Mammary epithelial cell (primary cell): ENCODE measurements at regions of chr4 and their contacts with region 1.

Region 1: GRCh38 chr4:85756938-85757337 is 282.0 kb downstream of the ARHGAP24 start:
- DNase-seq: no peak
- H3K4me3 ChIP-seq: no peak overlapping the region
- H3K27ac ChIP-seq: no peak overlapping the region
- H3K4me1 ChIP-seq: no peaks in the 10 kb centered on the region
- H3K27me3 ChIP-seq: no peaks in the 10 kb centered on the region
- CTCF ChIP-seq: peak; percentile 40 to 58

Region 2: GRCh38 chr4:85798012-85798770 is 41.3 kb after region 1 on chr4:
- CTCF ChIA-PET with region 1: no interaction called
- dilution Hi-C with region 1: no loop called
- in situ Hi-C with region 1: no loop called
- intact Hi-C with region 1: loop called (anchors 1 kb)
- DNase-seq: peak; percentile 53
- H3K4me3 ChIP-seq: no peak overlapping the region
- H3K27ac ChIP-seq: no peak overlapping the region
- H3K4me1 ChIP-seq: peaks cover 6% of the 10 kb centered on the region
- H3K27me3 ChIP-seq: no peaks in the 10 kb centered on the region
- CTCF ChIP-seq: no peak

Region 3: GRCh38 chr4:86223472-86223871 is 466.5 kb after region 1 on chr4:
- CTCF ChIA-PET with region 1: no interaction called
- dilution Hi-C with region 1: no loop called
- in situ Hi-C with region 1: no loop called
- intact Hi-C with region 1: loop called (anchors 2 kb)
- DNase-seq: peak; percentile 19
- H3K4me3 ChIP-seq: no peak overlapping the region
- H3K27ac ChIP-seq: no peak overlapping the region
- H3K4me1 ChIP-seq: peaks cover 7% of the 10 kb centered on the region
- H3K27me3 ChIP-seq: no peaks in the 10 kb centered on the region
- CTCF ChIP-seq: peak; percentile 49 to 76

Region 4: GRCh38 chr4:86593688-86594558 is 837.0 kb after region 1 on chr4 and contains the start of gene PTPN13:
- CTCF ChIA-PET with region 1: no interaction called
- dilution Hi-C with region 1: no loop called
- in situ Hi-C with region 1: no loop called
- intact Hi-C with region 1: no loop called
- DNase-seq: peak; percentile 99
- H3K4me3 ChIP-seq: peak within 1 kb of the TSS; percentile 85 to 94 (median 91)
- H3K27ac ChIP-seq: peak within 1 kb of the TSS; percentile 93
- H3K4me1 ChIP-seq: peaks cover 33% of the 10 kb centered on the region
- H3K27me3 ChIP-seq: no peaks in the 10 kb centered on the region
- CTCF ChIP-seq: peak in 1 of 2 donors; percentile 7
- total RNA-seq, gene PTPN13: 60.3 to 60.6 TPM